ENCODE measurements at regions of chr1 and their contacts with region 1.

Region 1: DNA sequence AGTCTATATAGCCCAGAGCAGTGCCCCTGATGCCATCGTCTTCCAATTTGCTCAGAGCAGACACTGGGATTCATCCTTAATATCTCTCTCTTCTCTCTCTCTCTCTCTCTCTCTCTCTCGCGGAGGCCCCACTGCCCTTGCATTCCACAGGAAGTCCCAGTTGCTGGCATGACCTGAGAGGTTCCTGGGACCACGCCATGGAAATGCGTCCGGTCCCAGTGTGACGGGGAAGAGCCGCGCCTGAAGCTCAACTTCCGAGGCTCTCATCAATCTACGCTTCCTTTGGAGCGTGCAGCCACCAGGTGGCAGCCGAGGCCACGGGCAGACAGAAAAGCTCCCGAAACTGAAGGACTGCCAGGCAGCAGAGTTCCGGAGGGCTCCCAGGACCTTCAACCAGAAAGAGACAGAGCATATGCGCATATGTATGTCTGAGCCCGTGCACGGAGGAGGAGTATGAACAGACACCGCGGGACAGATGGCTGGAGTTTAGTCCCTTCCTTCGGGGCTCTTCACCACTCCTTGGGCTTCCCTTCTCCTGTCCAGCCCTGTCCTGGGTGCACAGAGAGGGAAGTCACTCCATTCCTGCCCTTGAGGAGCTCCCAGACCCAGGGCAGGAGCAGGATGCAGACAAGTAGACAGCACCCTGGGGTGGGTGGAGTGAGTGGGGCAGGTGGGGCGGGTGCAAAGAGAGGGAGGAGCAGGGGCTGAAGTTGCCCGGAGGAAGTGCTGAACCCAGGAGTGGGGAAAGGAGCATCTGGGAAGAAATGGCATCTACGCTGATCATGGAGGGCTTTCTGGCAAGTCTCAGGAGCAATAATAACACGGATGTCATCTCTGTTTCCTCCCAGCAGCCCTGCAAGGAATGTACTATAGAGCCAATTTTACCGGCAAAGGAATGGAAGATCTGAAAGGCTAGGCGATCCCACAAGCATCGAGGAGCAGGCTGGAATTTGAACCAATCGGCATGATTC is 10.5 kb downstream of the PDZK1IP1 start:
- DNase-seq: peak; percentile 93
- H3K4me3 Mint-ChIP-seq: peak overlapping the region; percentile 74
- H3K27ac Mint-ChIP-seq: peak overlapping the region; percentile 99
- H3K4me1 Mint-ChIP-seq: peaks cover 58% of the 10 kb centered on the region
- H3K27me3 Mint-ChIP-seq: no peaks in the 10 kb centered on the region
- CTCF ChIP-seq: peak; percentile 87

Region 2: GRCh38 chr1:47002211-47002610 is 177.1 kb before region 1 on chr1:
- CTCF ChIA-PET with region 1: interaction called, 12 read pairs
- POLR2A ChIA-PET with region 1: no interaction called
- intact Hi-C with region 1: loop called (anchors 10 kb)
- DNase-seq: peak; percentile 25
- H3K4me3 Mint-ChIP-seq: no peak overlapping the region
- H3K27ac Mint-ChIP-seq: no peak overlapping the region
- H3K4me1 Mint-ChIP-seq: peaks cover 4% of the 10 kb centered on the region
- H3K27me3 Mint-ChIP-seq: no peaks in the 10 kb centered on the region
- CTCF ChIP-seq: peak; percentile 26

Region 3: DNA sequence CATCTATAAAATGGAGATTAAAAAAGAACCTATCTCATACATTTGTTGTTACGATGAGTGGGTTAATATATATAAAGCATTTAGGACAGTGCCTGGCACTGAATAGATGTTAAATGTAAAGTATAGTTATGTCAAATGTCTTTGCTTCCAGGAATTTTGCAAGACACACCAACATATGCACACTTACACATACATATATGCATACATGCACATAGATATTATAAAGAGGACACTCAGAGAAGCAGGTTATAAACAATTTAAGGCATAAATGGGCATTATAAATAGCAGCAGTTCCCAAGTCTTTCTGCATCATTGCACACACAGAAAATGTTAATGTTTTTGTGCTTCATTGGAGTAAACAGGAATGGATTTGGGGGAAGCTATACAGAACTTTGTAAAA is 142.5 kb before region 1 on chr1:
- CTCF ChIA-PET with region 1: no interaction called
- POLR2A ChIA-PET with region 1: no interaction called
- intact Hi-C with region 1: no loop called
- DNase-seq: no peak
- H3K4me3 Mint-ChIP-seq: no peak overlapping the region
- H3K27ac Mint-ChIP-seq: no peak overlapping the region
- H3K4me1 Mint-ChIP-seq: peaks cover 26% of the 10 kb centered on the region
- H3K27me3 Mint-ChIP-seq: no peaks in the 10 kb centered on the region
- CTCF ChIP-seq: no peak

Region 4: DNA sequence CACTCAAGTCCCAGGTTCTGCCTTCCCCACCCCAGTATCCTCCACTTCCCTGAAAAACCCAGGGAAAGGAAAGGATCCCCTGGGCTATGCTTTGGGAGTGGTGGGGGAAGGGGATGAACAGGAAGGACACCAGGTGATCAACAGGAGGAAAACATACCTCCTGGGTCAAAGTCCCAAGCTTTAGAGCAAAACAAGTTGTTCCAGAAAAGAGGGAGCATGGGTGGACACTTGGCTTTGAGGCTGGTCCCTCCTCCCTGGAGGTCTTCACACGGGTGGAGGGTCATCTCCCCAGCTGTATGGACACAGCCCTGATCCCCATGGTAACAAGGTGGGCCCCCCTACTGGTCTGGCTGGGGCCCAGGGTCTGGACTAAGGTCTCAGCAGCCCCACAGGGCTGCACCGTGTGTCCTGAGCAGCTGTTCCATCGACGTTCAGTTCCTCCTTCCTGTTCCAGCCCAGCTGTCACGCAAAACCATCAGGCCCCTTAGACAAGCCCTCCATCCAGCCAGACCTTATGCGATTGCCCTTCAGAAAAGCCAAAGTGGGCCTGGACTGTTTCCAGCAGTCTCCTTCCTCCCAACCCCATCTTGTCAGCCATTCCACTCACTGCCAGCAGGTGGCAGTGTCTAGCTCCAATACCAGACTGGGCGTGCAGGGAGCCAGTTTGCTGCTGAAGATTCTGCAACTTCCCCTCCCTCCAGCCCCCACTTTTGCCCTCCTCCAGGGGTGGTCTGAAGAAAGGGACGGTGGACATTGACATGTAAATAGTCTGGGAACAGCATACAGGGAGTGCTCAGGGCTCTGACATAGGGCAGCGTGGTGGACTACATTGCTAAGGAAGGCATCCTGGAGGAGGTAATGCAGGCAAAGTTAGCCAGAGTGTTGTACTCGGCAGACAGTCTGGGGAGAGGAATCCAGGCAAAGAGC is 13.4 kb after region 1 on chr1:
- CTCF ChIA-PET with region 1: interaction called, 158 read pairs
- POLR2A ChIA-PET with region 1: interaction called, 82 read pairs
- intact Hi-C with region 1: no loop called
- DNase-seq: peak; percentile 81
- H3K4me3 Mint-ChIP-seq: peak overlapping the region; percentile 58
- H3K27ac Mint-ChIP-seq: peak overlapping the region; percentile 62
- H3K4me1 Mint-ChIP-seq: peaks cover 33% of the 10 kb centered on the region
- H3K27me3 Mint-ChIP-seq: no peaks in the 10 kb centered on the region
- CTCF ChIP-seq: peak; percentile 92

Region 5: GRCh38 chr1:47333922-47334764 is 154.8 kb after region 1 on chr1:
- CTCF ChIA-PET with region 1: interaction called, 15 read pairs
- POLR2A ChIA-PET with region 1: interaction called, 21 read pairs
- intact Hi-C with region 1: no loop called
- DNase-seq: peak; percentile 73
- H3K4me3 Mint-ChIP-seq: no peak overlapping the region
- H3K27ac Mint-ChIP-seq: no peak overlapping the region
- H3K4me1 Mint-ChIP-seq: peaks cover 6% of the 10 kb centered on the region
- H3K27me3 Mint-ChIP-seq: no peaks in the 10 kb centered on the region
- CTCF ChIP-seq: peak; percentile 19

Region 6: DNA sequence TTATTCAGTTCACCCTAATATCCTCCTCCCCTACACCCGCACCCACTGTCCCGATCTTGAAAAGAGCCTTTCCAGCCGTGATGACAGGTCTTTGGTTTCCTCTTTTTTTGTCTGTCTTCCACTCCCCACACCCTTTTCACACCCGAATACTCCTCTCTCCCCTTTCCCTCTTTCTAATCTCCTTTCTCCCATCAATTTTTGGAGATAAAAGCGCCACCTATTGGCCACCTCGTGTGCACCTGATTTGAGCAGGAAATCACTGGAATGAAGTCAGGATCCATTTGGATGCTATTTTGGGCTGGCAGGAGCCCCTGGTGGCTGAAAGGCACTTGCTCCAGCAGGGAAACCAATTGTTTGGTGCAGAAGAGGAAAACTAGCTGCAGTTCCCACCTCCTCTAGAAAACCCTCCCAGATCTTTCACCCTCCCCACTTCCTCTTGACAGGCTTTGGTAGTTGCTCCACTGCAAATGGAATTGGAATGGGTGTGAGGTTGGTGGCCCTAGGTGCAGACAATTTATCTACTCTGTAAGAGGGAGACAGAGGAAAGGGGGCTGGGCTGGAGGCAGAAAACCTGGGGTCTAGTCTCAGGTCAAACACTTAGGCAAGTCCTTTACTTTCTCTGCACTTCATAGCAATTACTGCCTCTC is 245.2 kb after region 1 on chr1:
- CTCF ChIA-PET with region 1: interaction called, 6 read pairs
- POLR2A ChIA-PET with region 1: interaction called, 3 read pairs
- intact Hi-C with region 1: loop called (anchors 1 kb)
- DNase-seq: peak; percentile 81
- H3K4me3 Mint-ChIP-seq: no peak overlapping the region
- H3K27ac Mint-ChIP-seq: no peak overlapping the region
- H3K4me1 Mint-ChIP-seq: peaks cover 11% of the 10 kb centered on the region
- H3K27me3 Mint-ChIP-seq: no peaks in the 10 kb centered on the region
- CTCF ChIP-seq: peak; percentile 68